Naive thymus-derived CD4-positive, alpha-beta T cell (primary cell): ENCODE measurements at regions of chr9 and their contacts with region 1.

Region 1: GRCh38 chr9:6412487-6413364 is at the start of gene UHRF2:
- DNase-seq: peak; percentile 88 to 99 (median 97)
- ATAC-seq: peak; percentile 93
- H3K4me3 ChIP-seq: peak within 1 kb of the TSS; percentile 67
- H3K4me3 Mint-ChIP-seq: peak within 1 kb of the TSS; percentile 80 to 98 (median 92)
- H3K27ac ChIP-seq: peak within 1 kb of the TSS; percentile 86
- H3K27ac Mint-ChIP-seq: peak within 1 kb of the TSS; percentile 87 to 98 (median 95)
- H3K4me1 ChIP-seq: peaks cover 20 to 26% of the 10 kb centered on the region in 2 donors
- H3K4me1 Mint-ChIP-seq: peaks cover 23 to 41% (median 35%) of the 10 kb centered on the region in 7 donors
- H3K27me3 ChIP-seq: no peaks in the 10 kb centered on the region
- H3K27me3 Mint-ChIP-seq: peaks cover 0 to 9% (median 0%) of the 10 kb centered on the region in 5 donors
- total RNA-seq, gene UHRF2: 78.7 to 117 (median 111) TPM

Region 2: DNA sequence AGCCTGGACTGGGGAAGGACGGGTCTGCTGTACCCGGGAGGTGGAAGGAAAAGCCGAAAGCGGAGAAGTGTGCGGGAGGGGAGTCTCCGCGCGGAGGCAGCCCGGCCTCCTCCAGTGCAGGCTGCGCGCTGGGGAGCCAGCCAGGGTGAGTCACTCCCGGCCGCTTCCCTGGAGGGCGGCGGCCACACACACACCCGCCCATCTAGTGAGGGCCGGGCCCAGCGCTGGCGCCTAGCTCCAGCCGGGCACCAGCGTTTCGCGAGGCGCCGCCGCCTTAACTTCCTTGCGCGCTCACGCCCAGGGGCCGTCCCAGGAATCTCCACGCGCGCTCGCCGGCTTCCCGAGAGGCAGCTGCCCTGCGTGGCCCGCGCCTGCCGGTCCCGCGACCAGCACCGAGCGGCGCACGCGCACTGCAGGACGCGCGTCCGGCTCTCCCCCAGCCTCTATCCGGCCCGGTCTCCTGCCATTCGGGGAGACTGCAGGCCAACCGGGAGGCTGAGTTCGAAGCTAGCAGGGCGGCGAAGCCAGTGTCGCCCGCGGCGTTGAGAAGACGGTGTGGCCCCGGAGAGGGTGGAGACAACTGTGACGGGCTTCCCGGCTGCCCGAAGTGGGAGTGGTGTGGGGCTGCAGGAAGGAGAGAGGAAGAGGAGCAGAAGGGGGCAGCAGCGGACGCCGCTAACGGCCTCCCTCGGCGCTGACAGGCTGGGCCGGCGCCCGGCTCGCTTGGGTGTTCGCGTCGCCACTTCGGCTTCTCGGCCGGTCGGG is 1427.9 kb before region 1 on chr9 and contains the start of gene JAK2:
- CTCF ChIA-PET with region 1: no interaction called
- POLR2A ChIA-PET with region 1: interaction called, 5 read pairs
- intact Hi-C with region 1: loop called in 1 of 2 experiments (anchors 1 kb)
- DNase-seq: peak; percentile 62 to 85 (median 72)
- ATAC-seq: peak; percentile 87
- H3K4me3 ChIP-seq: peak within 1 kb of the TSS; percentile 52
- H3K4me3 Mint-ChIP-seq: peak within 1 kb of the TSS; percentile 83 to 98 (median 94)
- H3K27ac ChIP-seq: peak within 1 kb of the TSS; percentile 78
- H3K27ac Mint-ChIP-seq: peak within 1 kb of the TSS; percentile 80 to 94 (median 90)
- H3K4me1 ChIP-seq: peaks cover 20 to 32% of the 10 kb centered on the region in 2 donors
- H3K4me1 Mint-ChIP-seq: peaks cover 20 to 41% (median 26%) of the 10 kb centered on the region in 7 donors
- H3K27me3 ChIP-seq: no peaks in the 10 kb centered on the region
- H3K27me3 Mint-ChIP-seq: no peaks in the 10 kb centered on the region
- total RNA-seq, gene JAK2: 11.7 to 76.0 (median 17.5) TPM

Region 3: DNA sequence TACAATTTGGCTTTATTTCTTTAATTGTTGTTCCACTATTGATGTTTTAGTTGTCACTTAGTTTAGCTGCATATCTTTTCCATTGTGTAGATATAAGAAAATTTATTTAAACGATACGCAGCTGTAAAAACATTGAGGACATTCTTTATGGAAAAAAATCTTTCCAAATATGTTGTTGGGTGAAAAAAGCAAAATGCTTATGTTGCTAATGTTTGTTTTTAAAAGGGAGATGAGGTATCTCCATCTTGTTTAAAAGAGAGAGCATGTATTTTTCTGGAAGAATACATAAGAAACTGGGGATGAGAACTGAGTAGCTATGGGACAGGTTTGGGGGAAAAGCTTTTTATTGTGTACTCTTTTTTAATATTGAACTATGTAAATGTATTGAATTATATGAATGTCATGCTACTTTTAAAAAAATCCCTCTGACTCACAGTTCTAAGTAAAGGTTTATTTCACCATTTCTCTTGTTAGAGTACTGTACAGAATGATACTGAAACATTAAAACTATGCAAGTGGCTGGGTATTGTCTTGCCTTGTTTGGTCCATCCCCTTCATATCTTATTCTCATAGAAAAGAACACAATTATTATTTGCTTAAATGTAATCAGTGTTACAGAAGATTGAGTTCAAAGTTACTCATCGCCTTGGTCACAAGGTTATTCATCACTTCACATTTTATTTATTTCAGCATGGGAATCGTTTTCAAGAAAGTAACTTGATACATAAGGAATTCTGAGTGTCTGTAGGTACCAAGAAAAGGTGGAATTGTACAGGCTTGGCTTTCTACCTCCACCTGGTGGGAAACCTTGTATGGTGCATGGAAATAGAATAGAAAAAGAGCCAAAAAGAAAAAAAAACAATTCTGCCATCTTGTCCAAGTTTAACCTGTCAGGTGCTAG is 698.0 kb before region 1 on chr9:
- CTCF ChIA-PET with region 1: no interaction called
- POLR2A ChIA-PET with region 1: no interaction called
- intact Hi-C with region 1: no loop called
- DNase-seq: peak in 2 of 9 donors; percentile 1 to 7
- ATAC-seq: no peak
- H3K4me3 ChIP-seq: no peak overlapping the region
- H3K4me3 Mint-ChIP-seq: no peak overlapping the region
- H3K27ac ChIP-seq: no peak overlapping the region
- H3K27ac Mint-ChIP-seq: no peak overlapping the region
- H3K4me1 ChIP-seq: no peaks in the 10 kb centered on the region
- H3K4me1 Mint-ChIP-seq: peaks cover 0 to 17% (median 3%) of the 10 kb centered on the region in 7 donors
- H3K27me3 ChIP-seq: no peaks in the 10 kb centered on the region
- H3K27me3 Mint-ChIP-seq: no peaks in the 10 kb centered on the region

Region 4: GRCh38 chr9:5843794-5844504 is 568.8 kb before region 1 on chr9:
- CTCF ChIA-PET with region 1: no interaction called
- POLR2A ChIA-PET with region 1: no interaction called
- intact Hi-C with region 1: loop called in 1 of 2 experiments (anchors 5 kb)
- DNase-seq: peak in 2 of 9 donors; percentile 7 to 22
- ATAC-seq: peak; percentile 20
- H3K4me3 ChIP-seq: peak overlapping the region; percentile 5
- H3K4me3 Mint-ChIP-seq: peak overlapping the region; percentile 75 to 85 (median 80)
- H3K27ac ChIP-seq: peak overlapping the region; percentile 24
- H3K27ac Mint-ChIP-seq: peak overlapping the region; percentile 58 to 93 (median 91)
- H3K4me1 ChIP-seq: peaks cover 45 to 47% of the 10 kb centered on the region in 2 donors
- H3K4me1 Mint-ChIP-seq: peaks cover 50 to 83% (median 64%) of the 10 kb centered on the region in 7 donors
- H3K27me3 ChIP-seq: no peaks in the 10 kb centered on the region
- H3K27me3 Mint-ChIP-seq: no peaks in the 10 kb centered on the region

Region 5: DNA sequence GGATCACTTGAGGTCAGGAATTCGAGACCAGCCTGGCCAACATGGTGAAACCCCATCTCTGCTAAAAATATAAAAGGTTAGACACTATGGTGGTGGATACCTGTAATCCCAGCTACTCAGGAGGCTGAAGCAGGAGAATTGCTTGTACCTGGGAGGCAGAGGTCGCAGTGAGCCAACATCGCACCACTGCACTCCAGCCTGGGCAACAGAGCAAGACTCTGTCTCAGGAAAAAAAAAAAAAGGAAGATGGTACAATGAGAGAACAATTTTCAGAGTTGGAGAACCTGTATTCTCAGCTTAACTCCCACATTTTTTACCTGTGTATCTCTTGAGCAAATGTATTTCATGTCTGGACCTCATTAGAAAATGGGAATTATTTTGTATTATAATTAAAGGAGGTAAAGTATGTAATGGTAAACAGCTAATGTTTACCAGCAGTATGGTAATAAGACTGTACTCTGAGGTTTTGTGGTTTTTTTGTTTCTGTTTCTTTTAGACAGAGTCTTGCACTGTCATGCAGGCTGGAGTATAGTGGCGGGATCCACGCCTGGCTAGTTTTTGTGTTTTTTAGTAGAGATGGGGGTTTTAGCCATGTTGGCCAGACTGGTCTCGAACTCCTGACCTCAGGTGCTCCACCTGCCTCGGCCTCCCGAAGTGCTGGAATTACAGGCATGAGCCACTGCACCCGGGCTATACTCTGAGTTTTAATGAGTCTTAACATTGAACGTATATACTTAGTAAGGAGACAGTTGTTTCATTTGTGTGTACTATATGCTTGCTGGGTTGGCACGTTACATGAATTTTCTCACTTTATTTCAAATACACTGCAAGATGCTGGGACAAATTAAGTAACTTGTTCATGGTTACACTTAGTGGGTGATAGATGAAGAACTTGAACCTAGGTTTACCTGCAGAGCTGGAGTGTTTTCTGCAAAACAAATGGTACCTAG is 16.5 kb after region 1 on chr9:
- CTCF ChIA-PET with region 1: interaction called, 6 read pairs
- POLR2A ChIA-PET with region 1: interaction called, 17 read pairs
- intact Hi-C with region 1: loop called (anchors 1 kb)
- DNase-seq: peak in 1 of 9 donors; percentile 12
- ATAC-seq: peak; percentile 78
- H3K4me3 ChIP-seq: no peak overlapping the region
- H3K4me3 Mint-ChIP-seq: peak overlapping the region in 9 of 10 donors; percentile 1 to 80 (median 50)
- H3K27ac ChIP-seq: no peak overlapping the region
- H3K27ac Mint-ChIP-seq: peak overlapping the region in 8 of 9 donors; percentile 20 to 85 (median 57)
- H3K4me1 ChIP-seq: peaks cover 15 to 45% of the 10 kb centered on the region in 2 donors
- H3K4me1 Mint-ChIP-seq: peaks cover 52 to 90% (median 75%) of the 10 kb centered on the region in 7 donors
- H3K27me3 ChIP-seq: no peaks in the 10 kb centered on the region
- H3K27me3 Mint-ChIP-seq: no peaks in the 10 kb centered on the region

Region 6: DNA sequence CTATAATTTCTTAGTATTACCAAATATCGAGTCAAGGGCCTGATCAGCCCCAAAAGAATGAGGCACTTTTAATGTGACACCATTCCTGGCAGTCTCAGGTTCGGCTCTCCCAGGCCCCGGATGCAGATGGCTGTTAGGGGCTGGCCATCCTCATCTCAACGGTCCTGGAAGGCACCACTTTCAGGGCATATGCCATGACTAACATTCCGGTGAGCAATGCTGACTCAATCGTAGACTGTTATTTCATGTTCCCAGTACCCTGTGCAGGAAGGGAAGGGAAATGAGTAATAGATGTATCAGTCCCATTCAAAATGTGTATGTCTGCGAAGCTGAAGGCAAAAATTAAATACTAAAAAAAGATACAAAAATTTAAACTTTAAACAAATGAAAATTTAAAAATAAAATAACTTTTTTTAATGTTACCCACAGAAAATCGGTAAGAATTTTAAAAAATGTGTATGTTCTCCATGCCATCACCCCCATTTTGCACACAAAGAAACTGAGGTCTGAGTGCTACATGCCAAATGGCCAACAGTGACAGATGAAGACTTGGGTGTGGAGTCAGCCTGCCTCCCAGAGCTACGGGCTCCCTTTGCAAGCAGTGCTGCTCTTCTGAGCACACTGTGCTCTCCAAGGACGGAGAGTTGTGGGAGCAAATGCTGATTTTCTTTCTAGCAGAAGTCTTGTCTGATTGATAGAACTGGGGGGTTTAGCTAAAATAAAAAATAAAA is 153.8 kb after region 1 on chr9:
- CTCF ChIA-PET with region 1: no interaction called
- POLR2A ChIA-PET with region 1: no interaction called
- intact Hi-C with region 1: loop called in 1 of 2 experiments (anchors 2 kb)
- DNase-seq: peak in 1 of 9 donors; percentile 57
- ATAC-seq: peak; percentile 69
- H3K4me3 ChIP-seq: no peak overlapping the region
- H3K4me3 Mint-ChIP-seq: peak overlapping the region in 1 of 10 donors; percentile 62
- H3K27ac ChIP-seq: no peak overlapping the region
- H3K27ac Mint-ChIP-seq: peak overlapping the region in 2 of 9 donors; percentile 31 to 72
- H3K4me1 ChIP-seq: no peaks in the 10 kb centered on the region
- H3K4me1 Mint-ChIP-seq: peaks cover 0 to 23% (median 0%) of the 10 kb centered on the region in 7 donors
- H3K27me3 ChIP-seq: no peaks in the 10 kb centered on the region
- H3K27me3 Mint-ChIP-seq: peaks cover 0 to 7% (median 5%) of the 10 kb centered on the region in 5 donors

Region 7: DNA sequence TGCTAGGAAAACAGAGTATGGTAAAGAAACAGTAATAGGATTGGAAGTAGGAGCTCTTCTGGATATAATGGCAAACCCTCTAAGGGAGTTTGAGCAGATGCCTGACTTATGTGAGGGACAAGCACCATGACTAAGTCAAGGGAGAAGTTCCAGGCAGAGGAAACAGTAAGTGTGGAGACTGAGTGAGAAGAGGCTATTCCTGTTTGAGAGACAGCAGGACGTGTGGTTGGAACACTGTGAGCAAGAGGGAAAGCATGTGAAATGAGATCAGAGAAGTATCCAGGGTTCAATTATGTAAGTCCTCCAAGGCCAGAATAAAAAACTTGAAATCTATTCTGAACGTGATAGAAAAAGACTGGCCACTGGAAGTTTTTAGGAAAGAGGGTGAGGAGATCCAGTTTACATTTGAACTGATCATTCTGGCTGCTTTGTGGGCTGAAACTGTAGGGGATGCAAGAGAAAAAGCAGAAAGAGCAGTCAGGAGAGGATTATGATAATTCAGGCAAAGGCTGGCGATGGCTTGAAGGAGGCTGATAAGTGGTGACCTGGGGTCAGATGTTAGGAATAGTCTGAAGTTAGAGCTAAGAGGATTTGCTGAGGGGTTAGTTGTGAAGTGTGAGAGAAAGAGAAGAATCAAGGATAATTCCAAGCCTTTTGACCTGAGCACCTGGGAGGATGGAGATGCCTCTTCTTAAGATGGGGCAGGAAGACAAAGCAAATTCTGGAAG is 1367.7 kb after region 1 on chr9:
- CTCF ChIA-PET with region 1: no interaction called
- POLR2A ChIA-PET with region 1: no interaction called
- intact Hi-C with region 1: no loop called
- DNase-seq: no peak
- ATAC-seq: no peak
- H3K4me3 ChIP-seq: no peak overlapping the region
- H3K4me3 Mint-ChIP-seq: no peak overlapping the region
- H3K27ac ChIP-seq: no peak overlapping the region
- H3K27ac Mint-ChIP-seq: no peak overlapping the region
- H3K4me1 ChIP-seq: no peaks in the 10 kb centered on the region
- H3K4me1 Mint-ChIP-seq: peaks cover 0 to 8% (median 0%) of the 10 kb centered on the region in 7 donors
- H3K27me3 ChIP-seq: no peaks in the 10 kb centered on the region
- H3K27me3 Mint-ChIP-seq: peaks cover 0 to 10% (median 0%) of the 10 kb centered on the region in 5 donors

Region 8: DNA sequence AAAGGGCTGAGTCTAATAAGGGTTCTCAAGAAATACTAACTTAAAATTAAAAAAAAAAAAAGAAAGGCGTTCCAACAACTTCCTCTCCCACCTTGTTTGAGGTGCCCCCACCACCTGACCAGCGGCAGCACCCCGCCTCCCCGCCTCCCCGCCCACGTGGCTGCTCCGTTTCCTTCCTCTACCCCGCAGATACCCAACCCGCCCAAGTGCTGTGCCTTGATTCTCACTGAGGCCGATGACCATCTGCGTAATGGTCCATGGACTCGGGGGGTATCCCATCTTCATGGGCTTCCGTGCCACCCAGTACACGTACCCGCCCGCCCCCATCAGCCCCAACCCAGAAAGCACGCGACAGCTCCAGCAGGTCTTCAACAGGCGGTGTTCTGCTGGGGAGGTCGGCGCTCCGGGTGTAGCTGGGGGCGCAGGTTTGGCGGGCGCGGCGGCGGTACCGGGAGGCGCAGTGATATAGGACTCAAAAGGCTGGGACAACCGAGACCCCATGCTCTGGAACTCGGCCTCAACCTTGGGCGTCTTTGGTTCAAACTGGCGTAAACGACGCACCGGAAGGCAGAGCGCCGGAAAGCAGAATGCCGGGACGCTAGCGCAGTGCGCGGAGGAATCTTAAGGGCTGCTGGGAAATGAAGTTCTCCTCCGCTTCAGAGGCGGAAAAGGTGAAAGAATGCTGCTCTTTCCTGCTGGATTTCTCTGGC is 1386.7 kb after region 1 on chr9 and contains the start of gene DMAC1:
- CTCF ChIA-PET with region 1: no interaction called
- POLR2A ChIA-PET with region 1: no interaction called
- intact Hi-C with region 1: loop called in 1 of 2 experiments (anchors 1 kb)
- DNase-seq: peak; percentile 50 to 79 (median 72)
- ATAC-seq: peak; percentile 96
- H3K4me3 ChIP-seq: peak within 1 kb of the TSS; percentile 96
- H3K4me3 Mint-ChIP-seq: peak within 1 kb of the TSS; percentile 91 to 98 (median 95)
- H3K27ac ChIP-seq: peak within 1 kb of the TSS; percentile 88
- H3K27ac Mint-ChIP-seq: peak within 1 kb of the TSS; percentile 90 to 98 (median 93)
- H3K4me1 ChIP-seq: peaks cover 0 to 8% of the 10 kb centered on the region in 2 donors
- H3K4me1 Mint-ChIP-seq: peaks cover 12 to 62% (median 40%) of the 10 kb centered on the region in 7 donors
- H3K27me3 ChIP-seq: no peaks in the 10 kb centered on the region
- H3K27me3 Mint-ChIP-seq: peaks cover 0 to under 1% (median 0%) of the 10 kb centered on the region in 5 donors
- total RNA-seq, gene DMAC1: 17.5 to 54.1 (median 44.3) TPM